ENCODE measurements at regions of chr1 and their contacts with region 1.

Region 1: GRCh38 chr1:229227298-229227919 is 43.5 kb upstream of the RAB4A start:
- DNase-seq: peak; percentile 76 to 91 (median 81)
- ATAC-seq: peak; percentile 22 to 51 (median 30)
- H3K4me3 ChIP-seq: no peak overlapping the region
- H3K27ac ChIP-seq: no peak overlapping the region
- H3K4me1 ChIP-seq: peaks cover 0 to 39% (median 21%) of the 10 kb centered on the region in 12 donors
- H3K27me3 ChIP-seq: peaks cover 0 to 7% (median 0%) of the 10 kb centered on the region in 9 donors
- CTCF ChIP-seq: peak; percentile 78 to 93 (median 88)
- POLR2A ChIP-seq: no peak

Region 2: DNA sequence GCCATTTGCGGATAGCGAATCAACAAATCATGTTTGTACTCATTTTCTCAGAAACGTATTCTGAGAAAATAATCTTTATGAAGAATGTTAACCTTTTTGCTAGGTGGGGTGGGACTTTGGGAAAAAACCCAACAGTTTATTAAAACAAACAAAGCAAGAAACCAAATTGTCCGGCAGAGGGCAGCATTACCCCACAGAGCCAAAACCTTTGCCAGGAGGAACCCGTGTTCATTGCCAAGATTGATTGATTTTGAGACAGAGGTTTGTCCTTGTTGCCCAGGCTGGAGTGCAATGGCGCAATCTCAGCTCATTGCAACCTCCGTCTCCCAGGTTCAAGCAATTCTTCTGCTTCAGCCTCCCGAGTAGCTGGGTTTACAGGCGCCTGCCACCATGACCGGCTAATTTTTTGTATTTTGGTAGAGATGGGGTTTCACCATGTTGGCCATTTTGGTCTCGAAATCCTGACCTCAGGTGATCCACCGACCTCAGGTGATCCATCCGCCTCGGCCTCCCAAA is 563.0 kb before region 1 on chr1:
- intact Hi-C with region 1: loop called in 5 of 10 experiments (anchors 1 to 5 kb)
- DNase-seq: peak; percentile 57 to 72 (median 67)
- ATAC-seq: peak in 2 of 4 donors; percentile 34 to 57
- H3K4me3 ChIP-seq: no peak overlapping the region
- H3K27ac ChIP-seq: no peak overlapping the region
- H3K4me1 ChIP-seq: peaks cover 0 to 9% (median 2%) of the 10 kb centered on the region in 12 donors
- H3K27me3 ChIP-seq: peaks cover 0 to 8% (median 0%) of the 10 kb centered on the region in 9 donors
- CTCF ChIP-seq: peak; percentile 75 to 93 (median 83)
- POLR2A ChIP-seq: no peak

Region 3: GRCh38 chr1:228691926-228692325 is 535.5 kb before region 1 on chr1:
- intact Hi-C with region 1: loop called in 6 of 10 experiments (anchors 1 to 10 kb)
- DNase-seq: no peak
- ATAC-seq: peak in 1 of 4 donors; percentile 31
- H3K4me3 ChIP-seq: no peak overlapping the region
- H3K27ac ChIP-seq: no peak overlapping the region
- H3K4me1 ChIP-seq: peaks cover 0 to 12% (median 0%) of the 10 kb centered on the region in 12 donors
- H3K27me3 ChIP-seq: no peaks in the 10 kb centered on the region
- CTCF ChIP-seq: peak; percentile 27 to 59 (median 39)
- POLR2A ChIP-seq: no peak

Region 4: DNA sequence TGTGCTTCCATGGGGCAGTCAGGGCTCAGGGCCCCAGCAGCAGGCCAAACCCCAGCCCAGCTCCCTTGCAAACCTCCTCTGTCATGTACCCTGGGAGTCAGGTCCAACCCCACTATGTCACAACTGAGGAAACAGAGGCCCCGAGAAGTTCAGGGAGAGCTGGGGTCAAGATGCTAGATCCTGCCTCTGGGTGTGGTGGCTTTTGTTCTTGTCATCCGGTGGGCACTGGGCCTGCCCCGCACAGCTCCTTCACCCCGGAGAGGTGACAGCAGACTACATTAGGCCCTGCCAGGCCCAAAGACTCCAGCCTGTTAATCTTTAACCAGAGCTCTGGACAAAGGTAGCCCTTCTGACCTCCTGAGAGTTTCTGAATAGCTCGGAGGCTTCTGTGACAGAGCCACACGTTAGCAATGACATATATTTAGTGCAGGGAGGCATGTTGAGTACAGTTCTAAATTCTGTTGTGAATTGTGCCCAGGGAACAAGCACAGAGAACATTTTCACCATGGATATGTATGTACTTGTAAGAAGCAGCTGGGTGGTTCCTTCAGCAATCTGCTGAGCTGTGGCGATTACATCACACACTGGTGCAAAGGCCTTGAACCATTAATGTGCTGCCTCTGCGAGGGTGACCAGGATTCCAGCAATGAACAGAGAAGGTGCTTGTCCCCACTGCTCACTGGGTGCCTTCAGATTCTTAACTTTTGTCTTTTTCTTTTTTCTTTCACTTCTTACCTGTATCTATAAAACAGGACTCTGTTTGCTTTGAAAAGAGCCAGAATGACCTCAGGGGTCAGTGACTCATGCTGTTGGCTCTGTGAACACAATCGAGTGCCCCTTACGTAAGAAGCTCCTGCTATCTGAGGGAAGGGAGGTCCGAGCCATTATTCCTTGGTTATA is 389.3 kb before region 1 on chr1:
- intact Hi-C with region 1: loop called in 1 of 10 experiments (anchors 5 kb)
- DNase-seq: peak in 2 of 5 donors; percentile 32 to 50
- ATAC-seq: peak; percentile 36 to 82 (median 78)
- H3K4me3 ChIP-seq: no peak overlapping the region
- H3K27ac ChIP-seq: peak overlapping the region in 8 of 12 donors; percentile 10 to 67 (median 45)
- H3K4me1 ChIP-seq: peaks cover 0 to 26% (median 11%) of the 10 kb centered on the region in 12 donors
- H3K27me3 ChIP-seq: peaks cover 0 to 23% (median 0%) of the 10 kb centered on the region in 9 donors
- CTCF ChIP-seq: no peak
- POLR2A ChIP-seq: no peak

Region 5: DNA sequence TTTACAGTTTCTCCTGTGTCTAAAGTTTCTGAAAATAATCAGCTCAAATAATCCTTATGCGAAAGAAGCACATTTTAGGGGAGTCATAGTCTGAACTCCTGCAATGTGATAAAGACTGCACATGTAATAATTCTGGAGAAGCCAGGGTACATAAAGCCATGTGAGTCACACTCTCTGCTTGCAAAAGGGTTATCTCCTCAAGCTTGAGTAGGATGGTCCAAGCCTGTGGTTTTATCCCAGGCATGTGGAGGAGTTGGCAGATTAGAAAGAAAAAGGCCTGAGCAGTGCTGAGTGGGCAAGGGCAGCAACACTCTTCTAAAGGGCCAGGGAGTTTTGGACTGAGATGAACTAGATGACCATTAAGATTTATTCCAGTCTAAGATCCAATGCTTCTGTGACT is 271.7 kb before region 1 on chr1:
- intact Hi-C with region 1: no loop called
- DNase-seq: no peak
- ATAC-seq: peak in 1 of 4 donors; percentile 44
- H3K4me3 ChIP-seq: no peak overlapping the region
- H3K27ac ChIP-seq: no peak overlapping the region
- H3K4me1 ChIP-seq: peaks cover 0 to 14% (median 0%) of the 10 kb centered on the region in 12 donors
- H3K27me3 ChIP-seq: no peaks in the 10 kb centered on the region
- CTCF ChIP-seq: no peak
- POLR2A ChIP-seq: no peak

Region 6: DNA sequence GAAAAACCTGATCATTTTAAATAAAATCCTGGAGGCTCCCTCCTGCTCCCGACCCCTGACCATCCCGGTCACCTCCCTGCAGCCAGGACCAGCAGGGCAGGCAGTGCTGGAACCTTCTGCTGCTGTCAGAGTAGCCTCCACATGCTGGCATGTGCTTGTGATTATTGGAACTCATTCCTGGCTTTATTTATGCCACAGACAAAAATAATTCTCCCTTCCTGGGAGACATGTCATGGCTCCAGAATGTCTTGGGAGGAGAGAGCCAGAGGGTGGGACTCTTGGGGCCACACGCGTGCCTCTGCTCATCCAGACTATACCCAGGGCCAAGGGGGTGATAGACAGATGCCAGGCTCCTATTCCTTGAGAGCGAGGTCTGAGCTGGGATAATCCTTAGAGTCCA is 140.1 kb before region 1 on chr1:
- intact Hi-C with region 1: loop called in 1 of 10 experiments (anchors 10 kb)
- DNase-seq: no peak
- ATAC-seq: peak in 1 of 4 donors; percentile 7
- H3K4me3 ChIP-seq: no peak overlapping the region
- H3K27ac ChIP-seq: no peak overlapping the region
- H3K4me1 ChIP-seq: peaks cover 0 to 13% (median 0%) of the 10 kb centered on the region in 12 donors
- H3K27me3 ChIP-seq: peaks cover 0 to 3% (median 0%) of the 10 kb centered on the region in 9 donors
- CTCF ChIP-seq: no peak
- POLR2A ChIP-seq: no peak

Region 7: DNA sequence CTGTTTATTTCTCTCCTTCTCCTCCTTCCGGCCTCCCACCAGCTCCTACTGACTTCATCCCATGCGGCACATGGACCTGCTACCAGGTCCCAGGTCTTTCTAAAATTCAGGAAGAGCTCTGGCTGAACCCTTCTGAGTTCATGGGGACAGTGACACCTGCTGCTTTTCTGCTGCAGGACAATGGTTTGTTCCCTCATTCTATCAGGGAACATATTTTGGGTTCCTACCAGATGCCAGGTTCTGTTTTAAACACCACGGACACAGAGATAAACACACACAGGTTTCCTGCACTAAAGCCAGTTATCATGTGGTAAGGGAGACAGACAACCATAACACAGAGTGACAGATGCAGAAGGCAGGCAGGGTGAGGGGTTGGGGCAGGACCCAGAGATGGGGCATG is 70.5 kb before region 1 on chr1:
- intact Hi-C with region 1: loop called in 2 of 10 experiments (anchors 5 to 10 kb)
- DNase-seq: no peak
- ATAC-seq: peak in 3 of 4 donors; percentile 66 to 81 (median 66)
- H3K4me3 ChIP-seq: no peak overlapping the region
- H3K27ac ChIP-seq: peak overlapping the region in 2 of 12 donors; percentile 54 to 90
- H3K4me1 ChIP-seq: peaks cover 0 to 56% (median 2%) of the 10 kb centered on the region in 12 donors
- H3K27me3 ChIP-seq: peaks cover 0 to 1% (median 0%) of the 10 kb centered on the region in 9 donors
- CTCF ChIP-seq: peak; percentile 20 to 68 (median 56)
- POLR2A ChIP-seq: no peak

Region 8: GRCh38 chr1:229388876-229389580 is 161.6 kb after region 1 on chr1:
- intact Hi-C with region 1: no loop called
- DNase-seq: no peak
- ATAC-seq: no peak
- H3K4me3 ChIP-seq: no peak overlapping the region
- H3K27ac ChIP-seq: no peak overlapping the region
- H3K4me1 ChIP-seq: no peaks in the 10 kb centered on the region
- H3K27me3 ChIP-seq: peaks cover 0 to 5% (median 0%) of the 10 kb centered on the region in 9 donors
- CTCF ChIP-seq: no peak
- POLR2A ChIP-seq: no peak